Vagina (tissue), 2 donors: ENCODE measurements at regions of chr19 and their contacts with region 1.

Region 1: GRCh38 chr19:21092109-21092508 is 10.1 kb downstream of the ZNF714 start:
- DNase-seq: no peak
- H3K4me3 ChIP-seq: no peak overlapping the region
- H3K27ac ChIP-seq: no peak overlapping the region
- H3K4me1 ChIP-seq: no peaks in the 10 kb centered on the region
- H3K27me3 ChIP-seq: no peaks in the 10 kb centered on the region
- CTCF ChIP-seq: no peak
- POLR2A ChIP-seq: no peak

Region 2: GRCh38 chr19:21130097-21130775 is 38.1 kb after region 1 on chr19:
- intact Hi-C with region 1: no loop called
- DNase-seq: no peak
- H3K4me3 ChIP-seq: no peak overlapping the region
- H3K27ac ChIP-seq: no peak overlapping the region
- H3K4me1 ChIP-seq: no peaks in the 10 kb centered on the region
- H3K27me3 ChIP-seq: no peaks in the 10 kb centered on the region
- CTCF ChIP-seq: no peak
- POLR2A ChIP-seq: no peak

Region 3: DNA sequence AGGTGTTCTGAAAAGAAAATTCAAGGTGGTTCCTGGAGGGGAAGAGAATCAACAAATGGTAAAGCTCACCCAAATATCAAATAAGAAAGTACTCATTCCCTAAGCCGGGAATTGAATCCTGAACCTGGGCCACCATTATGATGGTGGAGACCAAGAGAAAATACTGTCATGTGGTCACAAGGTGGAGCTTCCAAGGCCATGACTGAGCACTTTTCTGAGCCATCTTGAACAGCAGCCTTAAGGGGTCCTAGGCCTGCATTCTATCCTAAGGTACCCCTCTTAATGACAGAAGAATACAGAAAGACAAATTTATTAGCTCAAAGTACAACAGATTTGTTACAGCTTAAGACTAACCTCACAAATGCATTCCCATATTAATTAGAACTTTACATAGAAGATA is 59.4 kb after region 1 on chr19:
- intact Hi-C with region 1: loop called (anchors 2 kb)
- DNase-seq: no peak
- H3K4me3 ChIP-seq: no peak overlapping the region
- H3K27ac ChIP-seq: no peak overlapping the region
- H3K4me1 ChIP-seq: no peaks in the 10 kb centered on the region
- H3K27me3 ChIP-seq: no peaks in the 10 kb centered on the region
- CTCF ChIP-seq: no peak
- POLR2A ChIP-seq: no peak